BJ (cell line): ENCODE measurements at regions of chr14 and their contacts with region 1.

Region 1: GRCh38 chr14:75307700-75308379 is 29.2 kb downstream of the FOS start:
- DNase-seq: no peak
- H3K4me3 ChIP-seq: no peak overlapping the region
- H3K27me3 ChIP-seq: no peaks in the 10 kb centered on the region
- CTCF ChIP-seq: peak; percentile 90

Region 2: GRCh38 chr14:75126679-75127473 is 181.0 kb before region 1 on chr14 and contains the start of gene NEK9:
- CTCF ChIA-PET with region 1: interaction called, 118 read pairs
- POLR2A ChIA-PET with region 1: interaction called, 3 read pairs
- DNase-seq: no peak
- H3K4me3 ChIP-seq: peak within 1 kb of the TSS; percentile 72
- H3K27me3 ChIP-seq: no peaks in the 10 kb centered on the region
- CTCF ChIP-seq: no peak
- polyA plus RNA-seq, gene NEK9: 38.1 and 53.4 TPM in 2 replicates

Region 3: GRCh38 chr14:75293920-75294642 is 13.8 kb before region 1 on chr14:
- CTCF ChIA-PET with region 1: interaction called, 18 read pairs
- POLR2A ChIA-PET with region 1: no interaction called
- DNase-seq: peak; percentile 83
- H3K4me3 ChIP-seq: peak overlapping the region; percentile 71
- H3K27me3 ChIP-seq: peaks cover 4% of the 10 kb centered on the region
- CTCF ChIP-seq: 0 out of 2 replicates have a peak, but pooled peaks have one; percentile 6

Region 4: GRCh38 chr14:75467763-75468420 is 160.1 kb after region 1 on chr14:
- CTCF ChIA-PET with region 1: interaction called, 11 read pairs
- POLR2A ChIA-PET with region 1: no interaction called
- DNase-seq: no peak
- H3K4me3 ChIP-seq: no peak overlapping the region
- H3K27me3 ChIP-seq: no peaks in the 10 kb centered on the region
- CTCF ChIP-seq: no peak

Region 5: GRCh38 chr14:75487155-75487671 is 179.4 kb after region 1 on chr14:
- CTCF ChIA-PET with region 1: interaction called, 171 read pairs
- POLR2A ChIA-PET with region 1: no interaction called
- DNase-seq: no peak
- H3K4me3 ChIP-seq: no peak overlapping the region
- H3K27me3 ChIP-seq: peaks cover 7% of the 10 kb centered on the region
- CTCF ChIP-seq: no peak

Region 6: GRCh38 chr14:75560962-75561432 is 253.2 kb after region 1 on chr14:
- CTCF ChIA-PET with region 1: interaction called, 27 read pairs
- POLR2A ChIA-PET with region 1: no interaction called
- DNase-seq: no peak
- H3K4me3 ChIP-seq: no peak overlapping the region
- H3K27me3 ChIP-seq: peaks cover 5% of the 10 kb centered on the region
- CTCF ChIP-seq: peak; percentile 90